H1 (cell line): ENCODE measurements at regions of chr12 and their contacts with region 1.

Region 1: DNA sequence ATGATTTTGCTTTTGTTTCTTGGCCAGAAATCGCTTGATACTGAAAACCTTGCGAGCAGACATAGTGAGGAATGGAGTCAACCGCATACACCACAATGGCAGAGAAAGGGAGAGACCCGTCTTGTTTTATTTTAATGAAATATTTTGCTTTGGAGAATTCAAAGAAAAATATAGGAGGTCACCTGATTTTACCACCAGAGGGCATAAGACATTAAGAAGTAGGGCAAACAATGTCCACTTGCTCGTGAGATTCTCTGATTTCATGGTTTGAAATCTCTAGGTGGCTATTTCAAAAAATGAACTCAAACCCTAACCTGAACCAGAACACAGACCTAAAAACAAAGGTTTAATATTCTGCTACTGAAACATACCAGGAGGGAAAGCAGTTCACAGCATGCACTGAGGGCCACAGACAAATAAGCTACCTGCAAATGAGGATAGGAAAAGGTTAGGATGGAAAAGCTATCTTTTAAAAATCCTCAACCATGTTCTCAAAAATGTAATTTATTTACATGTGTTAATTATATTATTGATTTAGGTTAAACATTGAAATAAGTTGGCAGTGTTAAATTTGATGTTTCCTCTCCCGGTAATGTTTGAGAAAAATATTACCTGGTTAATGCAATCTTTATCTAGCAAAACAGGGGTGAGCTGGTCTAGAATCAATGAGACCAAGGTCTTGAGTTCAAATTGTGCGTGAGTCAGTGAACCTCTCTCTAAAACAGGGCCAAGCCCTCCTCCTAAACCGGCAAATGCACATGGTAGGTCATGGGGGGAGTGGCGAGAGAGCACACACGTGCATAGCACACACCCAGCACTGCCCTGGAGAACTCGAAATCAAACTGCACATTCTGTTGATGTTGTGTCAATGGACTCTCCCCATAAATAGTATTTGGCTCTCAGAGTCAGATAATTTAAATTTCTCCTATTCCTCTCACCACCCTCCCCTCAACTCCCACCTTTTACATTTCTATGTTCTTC is 12.5 kb downstream of the IFNG-AS1 start:
- DNase-seq: no peak
- H3K4me3 ChIP-seq: no peak overlapping the region
- H3K27ac ChIP-seq: no peak overlapping the region
- H3K4me1 ChIP-seq: no peaks in the 10 kb centered on the region; a peak in 2 of 7 replicates
- H3K27me3 ChIP-seq: no peaks in the 10 kb centered on the region
- CTCF ChIP-seq: peak in 2 of 3 experiments; percentile 26 to 31; a peak in 2 of 4 replicates
- EP300 ChIP-seq: no peak
- POLR2A ChIP-seq: no peak
- RAD21 ChIP-seq: peak; percentile 32 to 53; a peak in 3 of 4 replicates

Region 2: GRCh38 chr12:68040450-68041075 is 38.8 kb after region 1 on chr12:
- CTCF ChIA-PET with region 1: interaction called, 10 read pairs
- POLR2A ChIA-PET with region 1: interaction called, 3 read pairs
- DNase-seq: peak in 1 of 2 experiments; percentile 67
- H3K4me3 ChIP-seq: no peak overlapping the region
- H3K27ac ChIP-seq: no peak overlapping the region
- H3K4me1 ChIP-seq: no peaks in the 10 kb centered on the region
- H3K27me3 ChIP-seq: no peaks in the 10 kb centered on the region
- CTCF ChIP-seq: peak; percentile 25 to 81 (median 76)
- EP300 ChIP-seq: no peak
- POLR2A ChIP-seq: no peak
- RAD21 ChIP-seq: peak; percentile 94 to 96

Region 3: DNA sequence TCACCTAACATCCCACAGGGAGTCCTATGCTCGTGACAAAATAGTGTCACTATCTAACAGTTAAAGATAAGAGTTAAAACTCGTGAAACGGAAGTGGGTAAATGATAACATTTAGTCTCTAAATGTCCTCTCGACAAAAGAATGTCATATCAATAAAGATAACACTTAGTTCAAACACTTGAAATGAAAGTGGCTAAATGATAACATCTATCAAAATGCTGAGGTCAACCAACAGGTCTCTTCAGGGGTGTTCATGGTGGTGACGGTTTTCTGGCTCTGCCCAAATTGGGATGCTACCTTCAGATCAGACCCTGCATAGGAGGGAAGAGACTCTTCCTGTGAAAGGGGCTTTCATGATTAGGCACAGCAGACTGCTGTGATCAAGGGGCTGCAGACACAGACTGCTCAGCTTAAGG is 201.7 kb after region 1 on chr12:
- CTCF ChIA-PET with region 1: no interaction called
- POLR2A ChIA-PET with region 1: no interaction called
- DNase-seq: no peak
- H3K4me3 ChIP-seq: no peak overlapping the region
- H3K27ac ChIP-seq: no peak overlapping the region
- H3K4me1 ChIP-seq: peaks cover 0 to 6% (median 3%) of the 10 kb centered on the region in 4 experiments; a peak in 4 of 7 replicates
- H3K27me3 ChIP-seq: no peaks in the 10 kb centered on the region
- CTCF ChIP-seq: no peak
- EP300 ChIP-seq: no peak
- POLR2A ChIP-seq: no peak
- RAD21 ChIP-seq: no peak